ENCODE measurements at regions of chr17 and their contacts with region 1.

Region 1: DNA sequence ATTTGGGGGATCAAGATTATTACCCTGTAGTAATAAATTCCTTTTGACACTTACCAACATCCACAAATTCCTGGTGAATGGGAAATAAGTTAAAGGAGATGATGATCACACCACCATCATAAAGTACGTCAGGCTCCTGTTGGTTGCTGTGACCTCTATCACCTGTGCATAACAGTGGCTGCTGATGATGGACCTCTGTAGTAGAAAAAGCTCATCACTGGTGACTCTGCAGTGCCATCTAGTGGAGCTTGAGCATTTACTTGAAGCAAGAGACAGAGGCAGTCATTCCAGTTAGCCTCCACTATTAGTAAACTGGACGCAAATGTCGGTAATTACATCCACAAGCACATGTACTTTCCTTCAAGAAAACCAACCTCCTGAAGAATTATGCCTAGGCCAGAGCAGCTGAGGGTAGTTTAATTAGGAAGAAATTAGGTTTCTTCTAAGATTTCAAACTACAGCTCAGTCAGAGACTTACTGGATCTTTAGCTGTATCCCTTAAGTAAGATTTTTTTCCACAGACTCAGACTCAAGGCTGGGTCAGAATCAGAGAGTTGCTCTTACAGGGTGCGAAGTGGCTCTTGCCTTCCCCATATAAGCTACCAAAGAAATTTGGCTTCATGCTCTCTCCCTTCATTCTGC is 39.3 kb downstream of the CYB561 start:
- DNase-seq: peak; percentile 44
- H3K4me3 Mint-ChIP-seq: no peak overlapping the region
- H3K27ac Mint-ChIP-seq: no peak overlapping the region
- H3K4me1 Mint-ChIP-seq: peaks cover 4% of the 10 kb centered on the region
- H3K27me3 Mint-ChIP-seq: peaks cover 4% of the 10 kb centered on the region

Region 2: DNA sequence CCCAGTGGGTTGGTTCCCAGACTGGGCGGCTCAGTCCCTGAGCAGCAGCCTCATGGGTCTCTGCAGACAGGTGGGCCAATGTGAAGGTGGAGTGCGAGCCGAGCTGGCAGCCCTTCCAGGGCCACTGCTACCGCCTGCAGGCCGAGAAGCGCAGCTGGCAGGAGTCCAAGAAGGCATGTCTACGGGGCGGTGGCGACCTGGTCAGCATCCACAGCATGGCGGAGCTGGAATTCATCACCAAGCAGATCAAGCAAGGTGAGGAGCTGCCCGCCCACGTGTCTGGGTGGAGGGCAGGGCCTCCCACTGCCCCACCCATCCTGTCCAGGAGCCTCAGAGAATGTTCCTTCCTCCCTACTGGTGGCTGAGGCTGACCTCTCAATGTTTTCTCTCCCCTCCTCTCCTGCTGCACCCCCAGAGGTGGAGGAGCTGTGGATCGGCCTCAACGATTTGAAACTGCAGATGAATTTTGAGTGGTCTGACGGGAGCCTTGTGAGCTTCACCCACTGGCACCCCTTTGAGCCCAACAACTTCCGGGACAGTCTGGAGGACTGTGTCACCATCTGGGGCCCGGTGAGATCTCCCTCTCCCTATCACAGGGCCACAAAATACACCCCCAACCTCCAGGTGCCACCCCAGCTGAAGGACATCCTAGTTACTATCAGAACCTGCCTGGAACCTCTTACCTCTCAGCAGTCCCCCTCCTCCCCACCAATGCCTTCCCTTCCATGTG is 735.1 kb before region 1 on chr17:
- intact Hi-C with region 1: loop called (anchors 1 kb)
- DNase-seq: no peak
- H3K4me3 Mint-ChIP-seq: no peak overlapping the region
- H3K27ac Mint-ChIP-seq: no peak overlapping the region
- H3K4me1 Mint-ChIP-seq: no peaks in the 10 kb centered on the region
- H3K27me3 Mint-ChIP-seq: no peaks in the 10 kb centered on the region

Region 3: GRCh38 chr17:62995377-62995885 is 411.4 kb before region 1 on chr17:
- intact Hi-C with region 1: loop called (anchors 2 kb)
- DNase-seq: no peak
- H3K4me3 Mint-ChIP-seq: no peak overlapping the region
- H3K27ac Mint-ChIP-seq: no peak overlapping the region
- H3K4me1 Mint-ChIP-seq: no peaks in the 10 kb centered on the region
- H3K27me3 Mint-ChIP-seq: peaks cover 2% of the 10 kb centered on the region

Region 4: GRCh38 chr17:63082273-63082993 is 324.4 kb before region 1 on chr17:
- intact Hi-C with region 1: loop called (anchors 1 kb)
- DNase-seq: no peak
- H3K4me3 Mint-ChIP-seq: no peak overlapping the region
- H3K27ac Mint-ChIP-seq: no peak overlapping the region
- H3K4me1 Mint-ChIP-seq: no peaks in the 10 kb centered on the region
- H3K27me3 Mint-ChIP-seq: peaks cover 4% of the 10 kb centered on the region